Activated T-helper 1 cell treated with anti-CD3 and anti-CD28 coated beads, Interleukin-12 subunit alpha, Interleukin-12 subunit beta, Interleukin-2, Interleukin-4 antibody, amounts not matched to agents 30 ng/mL and 10 ng/mL and 1 ng/mL, durations not matched to agents 14 hours and 24 hours and 36 hours (primary cell): ENCODE measurements at regions of chr22 and their contacts with region 1.

Region 1: DNA sequence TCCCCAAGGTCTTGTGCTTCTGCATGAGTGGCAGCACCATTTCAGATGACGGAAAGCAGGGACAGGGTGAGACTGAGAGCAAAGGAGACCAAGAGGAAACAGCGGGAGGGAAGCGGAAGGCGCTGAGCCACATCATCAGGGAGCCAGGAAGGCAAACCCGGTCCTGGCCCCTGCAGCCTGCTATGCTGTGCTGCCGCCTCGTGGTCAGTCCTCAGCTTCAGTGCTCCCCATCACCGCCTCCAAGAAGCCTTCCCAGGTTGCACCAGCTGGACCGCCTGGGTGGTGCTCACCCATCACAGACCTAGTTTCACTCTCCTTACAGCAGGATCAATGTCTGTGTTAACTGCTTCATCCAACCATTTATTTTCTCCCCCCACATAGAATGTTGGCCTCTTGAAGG is 73.0 kb upstream of the PHF21B start:
- DNase-seq: no peak
- H3K4me3 Mint-ChIP-seq: no peak overlapping the region
- H3K27ac Mint-ChIP-seq: no peak overlapping the region
- H3K4me1 Mint-ChIP-seq: peaks cover 6% of the 10 kb centered on the region
- H3K27me3 Mint-ChIP-seq: peaks cover 9% of the 10 kb centered on the region

Region 2: DNA sequence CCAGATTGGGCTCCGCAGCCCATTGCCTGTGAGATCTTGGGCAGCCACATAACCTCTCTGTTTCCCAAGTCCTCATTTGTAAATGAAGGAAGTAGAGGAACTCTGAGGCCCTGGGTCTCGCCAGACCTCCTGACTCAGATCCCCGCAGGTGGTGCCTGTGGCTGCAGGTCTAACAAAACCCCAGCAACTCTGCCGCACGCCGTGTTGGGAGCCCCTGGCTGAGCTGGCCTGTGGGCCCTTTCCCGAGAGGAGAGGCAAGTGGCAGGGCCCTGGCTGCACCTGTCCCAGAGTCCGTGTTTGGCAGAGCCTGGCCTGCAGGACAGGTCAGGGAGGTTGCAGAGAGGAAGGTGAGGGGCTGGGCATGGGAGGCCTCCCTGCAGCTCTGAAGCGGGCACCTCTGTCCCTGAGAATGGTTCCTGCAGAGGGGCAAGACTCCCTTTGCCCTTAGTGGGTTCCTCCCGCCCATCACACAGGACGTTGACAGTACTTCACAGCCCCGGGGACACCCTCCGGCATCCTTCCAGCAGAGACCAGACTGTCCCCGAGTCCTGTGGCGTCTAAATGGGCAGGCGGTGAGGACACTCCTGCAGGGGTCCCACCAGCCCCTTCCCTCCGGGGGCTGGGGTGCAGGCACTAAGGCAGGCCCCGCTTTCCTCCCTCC is 262.7 kb before region 1 on chr22:
- intact Hi-C with region 1: loop called (anchors 5 kb)
- DNase-seq: no peak
- H3K4me3 Mint-ChIP-seq: no peak overlapping the region
- H3K27ac Mint-ChIP-seq: no peak overlapping the region
- H3K4me1 Mint-ChIP-seq: no peaks in the 10 kb centered on the region
- H3K27me3 Mint-ChIP-seq: no peaks in the 10 kb centered on the region

Region 3: DNA sequence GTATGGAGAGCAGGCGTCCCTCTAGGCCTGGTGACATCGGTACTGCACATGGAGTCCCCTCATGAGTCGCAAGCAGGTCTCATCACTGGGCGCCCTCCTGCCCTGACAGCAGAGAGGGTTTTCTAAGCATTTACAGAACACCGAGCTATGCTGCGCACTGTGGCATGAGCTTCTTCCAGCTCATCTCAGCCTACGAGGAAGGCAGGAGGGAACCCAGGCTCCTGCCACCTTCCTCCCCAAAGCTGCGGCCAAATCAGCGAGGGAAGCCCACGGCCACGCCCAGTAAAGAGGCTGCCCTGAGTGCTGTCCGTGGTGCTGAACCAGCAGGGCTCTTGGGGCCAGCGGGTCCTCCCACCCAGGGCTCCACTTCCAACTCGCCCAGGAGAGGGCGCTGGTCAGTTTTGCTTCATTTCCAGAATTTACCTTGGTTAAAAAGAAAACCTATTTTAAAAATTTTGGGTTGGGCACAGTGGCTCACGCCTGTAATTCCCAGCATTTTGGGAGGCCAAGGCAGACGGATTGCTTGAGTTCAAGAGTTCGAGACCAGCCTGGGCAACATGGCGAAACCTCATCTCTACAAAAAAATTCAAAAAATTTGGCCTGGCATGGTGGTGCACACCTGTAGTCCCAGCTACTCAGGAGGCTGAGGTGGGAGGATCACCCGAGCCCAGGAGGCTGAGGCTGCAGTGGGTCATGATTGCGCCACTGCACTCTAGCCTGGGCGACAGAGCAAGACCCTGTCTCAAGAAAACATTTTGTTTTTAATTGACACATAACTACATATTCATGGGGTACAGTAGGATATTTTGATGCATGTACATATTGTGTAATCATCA is 107.2 kb before region 1 on chr22:
- intact Hi-C with region 1: loop called (anchors 5 kb)
- DNase-seq: peak; percentile 72
- H3K4me3 Mint-ChIP-seq: no peak overlapping the region
- H3K27ac Mint-ChIP-seq: no peak overlapping the region
- H3K4me1 Mint-ChIP-seq: no peaks in the 10 kb centered on the region
- H3K27me3 Mint-ChIP-seq: no peaks in the 10 kb centered on the region